ENCODE measurements at regions of chr14 and their contacts with region 1.

Region 1: DNA sequence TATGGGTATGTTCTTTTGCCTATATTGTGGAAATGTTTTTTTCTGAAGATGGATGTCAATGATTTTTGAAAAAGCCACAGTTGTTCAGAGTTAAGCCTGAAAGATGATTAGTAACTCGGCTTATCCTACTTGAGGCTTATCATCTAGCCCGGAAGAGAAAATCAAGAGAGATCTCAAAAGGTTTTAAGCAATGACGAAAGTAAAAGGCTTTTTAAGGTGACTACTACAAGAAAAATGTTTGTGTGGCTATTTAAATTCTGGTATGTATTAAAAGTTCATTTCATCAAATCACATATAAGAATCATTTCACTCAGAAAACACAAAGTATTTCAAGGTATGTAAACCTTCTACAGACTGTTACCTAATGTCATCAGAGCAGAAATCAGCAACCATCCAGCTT is 40.2 kb downstream of the HEATR5A start:
- DNase-seq: no peak
- ATAC-seq: no peak
- H3K4me3 ChIP-seq: no peak overlapping the region
- H3K27ac ChIP-seq: no peak overlapping the region
- H3K4me1 ChIP-seq: peaks cover 12% of the 10 kb centered on the region
- H3K27me3 ChIP-seq: no peaks in the 10 kb centered on the region
- CTCF ChIP-seq: no peak

Region 2: GRCh38 chr14:31414190-31414833 is 34.2 kb after region 1 on chr14:
- CTCF ChIA-PET with region 1: no interaction called
- POLR2A ChIA-PET with region 1: no interaction called
- intact Hi-C with region 1: loop called (anchors 5 kb)
- DNase-seq: peak; percentile 72
- ATAC-seq: peak; percentile 92
- H3K4me3 ChIP-seq: no peak overlapping the region
- H3K27ac ChIP-seq: peak overlapping the region; percentile 4
- H3K4me1 ChIP-seq: peaks cover 25% of the 10 kb centered on the region
- H3K27me3 ChIP-seq: no peaks in the 10 kb centered on the region
- CTCF ChIP-seq: no peak